Aorta (tissue), 5 donors: ENCODE measurements at regions of chr6 and their contacts with region 1.

Region 1: GRCh38 chr6:136685540-136686108 is 106.7 kb downstream of the MAP3K5 start:
- DNase-seq: peak in 1 of 2 donors; percentile 46
- ATAC-seq: no peak
- H3K4me3 ChIP-seq: no peak overlapping the region
- H3K27ac ChIP-seq: peak overlapping the region; percentile 67 to 69
- H3K4me1 ChIP-seq: peaks cover 6 to 9% of the 10 kb centered on the region in 2 donors
- H3K27me3 ChIP-seq: no peaks in the 10 kb centered on the region

Region 2: DNA sequence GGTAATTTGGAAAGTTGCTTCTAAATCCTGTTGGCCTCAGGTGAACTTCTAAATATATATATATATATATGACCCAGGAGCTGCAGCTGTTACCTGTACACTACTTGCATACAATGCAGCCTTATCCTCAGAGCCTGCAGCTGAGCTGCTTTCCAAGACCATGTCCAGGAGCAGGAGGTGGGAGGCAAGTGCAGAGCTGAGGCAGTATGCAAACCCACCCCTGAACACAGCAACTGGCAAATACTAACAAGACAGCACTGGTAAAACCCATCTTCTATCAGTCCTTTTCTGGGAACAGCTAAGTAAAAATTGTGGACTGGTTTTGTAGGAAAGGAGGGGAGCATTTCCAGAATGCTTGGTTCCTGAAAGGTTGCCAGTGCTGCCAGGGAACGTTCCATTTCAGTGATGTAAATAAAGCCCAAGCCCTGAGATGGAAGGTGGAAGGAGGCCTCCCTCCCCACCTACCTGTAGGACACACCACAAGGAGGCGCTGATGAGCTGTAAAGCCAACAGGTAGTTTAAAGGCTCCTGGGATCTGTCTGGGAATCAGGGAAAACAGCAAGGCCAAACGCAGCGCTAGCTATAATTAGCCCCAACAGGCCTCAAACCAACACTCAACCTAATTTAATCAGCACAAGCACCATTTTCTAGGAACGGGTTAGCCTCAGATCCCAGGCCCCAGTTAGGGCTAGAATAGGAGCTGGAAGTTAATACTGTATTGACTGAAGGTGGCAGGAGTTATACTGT is 41.6 kb before region 1 on chr6:
- intact Hi-C with region 1: no loop called
- DNase-seq: peak; percentile 94 to 96
- ATAC-seq: peak; percentile 94
- H3K4me3 ChIP-seq: no peak overlapping the region
- H3K27ac ChIP-seq: peak overlapping the region; percentile 16 to 83
- H3K4me1 ChIP-seq: peaks cover 0 to 8% of the 10 kb centered on the region in 2 donors
- H3K27me3 ChIP-seq: no peaks in the 10 kb centered on the region

Region 3: DNA sequence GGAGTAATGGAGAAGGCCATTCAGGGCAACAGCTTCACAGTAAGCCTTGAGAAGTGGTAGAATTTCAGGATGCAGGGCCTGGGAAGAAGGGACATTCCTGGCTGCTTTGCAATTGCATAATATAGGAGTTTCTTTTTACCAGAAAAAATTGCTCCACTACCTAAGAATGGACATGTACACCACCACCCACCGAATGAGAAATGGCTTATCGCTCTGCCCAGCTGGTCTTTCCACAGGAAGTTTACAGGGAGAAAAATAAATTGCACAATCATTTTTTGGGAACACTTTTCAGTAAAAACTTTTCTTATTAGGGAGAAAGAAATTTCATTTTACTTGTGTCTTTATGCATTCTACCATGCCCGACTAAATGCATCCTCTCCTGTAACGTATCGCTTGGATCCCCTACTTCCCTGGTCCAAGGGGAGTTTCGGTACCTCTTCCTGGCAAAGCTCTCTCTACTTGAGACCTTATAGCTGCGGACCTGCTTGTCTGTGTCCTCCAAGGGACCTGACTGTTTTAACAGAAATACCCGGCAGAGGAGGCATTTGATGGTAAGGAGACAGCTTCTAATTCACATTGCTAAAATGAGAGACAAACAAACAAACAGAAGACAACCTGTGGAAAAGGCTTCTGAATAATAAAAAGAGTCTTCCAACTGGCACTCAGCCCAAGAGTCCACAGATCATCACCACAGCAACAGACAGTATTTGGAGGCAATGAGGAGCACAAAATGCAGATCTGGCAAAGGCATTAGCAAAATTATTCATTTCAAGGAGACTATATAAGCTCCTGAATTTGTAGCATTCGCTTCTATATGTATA is 52.5 kb after region 1 on chr6:
- intact Hi-C with region 1: loop called in 1 of 2 experiments (anchors 5 kb)
- DNase-seq: peak in 1 of 2 donors; percentile 55
- ATAC-seq: peak; percentile 80
- H3K4me3 ChIP-seq: no peak overlapping the region
- H3K27ac ChIP-seq: peak overlapping the region; percentile 80 to 99
- H3K4me1 ChIP-seq: peaks cover 2 to 13% of the 10 kb centered on the region in 2 donors
- H3K27me3 ChIP-seq: no peaks in the 10 kb centered on the region

Region 4: GRCh38 chr6:136783495-136784270 is 98.1 kb after region 1 on chr6:
- intact Hi-C with region 1: loop called in 1 of 2 experiments (anchors 5 kb)
- DNase-seq: peak in 1 of 2 donors; percentile 74
- ATAC-seq: peak; percentile 54
- H3K4me3 ChIP-seq: no peak overlapping the region
- H3K27ac ChIP-seq: peak overlapping the region in 1 of 2 donors; percentile 26
- H3K4me1 ChIP-seq: peaks cover 3 to 35% of the 10 kb centered on the region in 2 donors
- H3K27me3 ChIP-seq: no peaks in the 10 kb centered on the region

Region 5: GRCh38 chr6:136859430-136859829 is 173.8 kb after region 1 on chr6:
- intact Hi-C with region 1: no loop called
- DNase-seq: no peak
- ATAC-seq: no peak
- H3K4me3 ChIP-seq: no peak overlapping the region
- H3K27ac ChIP-seq: no peak overlapping the region
- H3K4me1 ChIP-seq: no peaks in the 10 kb centered on the region
- H3K27me3 ChIP-seq: no peaks in the 10 kb centered on the region